Activated CD4-positive, alpha-beta T cell treated with anti-CD3 and anti-CD28 coated beads, Interleukin-2, amount 10 ng/mL, durations not matched to agents 24 days and 14 days (primary cell): ENCODE measurements at regions of chr10 and their contacts with region 1.

Region 1: DNA sequence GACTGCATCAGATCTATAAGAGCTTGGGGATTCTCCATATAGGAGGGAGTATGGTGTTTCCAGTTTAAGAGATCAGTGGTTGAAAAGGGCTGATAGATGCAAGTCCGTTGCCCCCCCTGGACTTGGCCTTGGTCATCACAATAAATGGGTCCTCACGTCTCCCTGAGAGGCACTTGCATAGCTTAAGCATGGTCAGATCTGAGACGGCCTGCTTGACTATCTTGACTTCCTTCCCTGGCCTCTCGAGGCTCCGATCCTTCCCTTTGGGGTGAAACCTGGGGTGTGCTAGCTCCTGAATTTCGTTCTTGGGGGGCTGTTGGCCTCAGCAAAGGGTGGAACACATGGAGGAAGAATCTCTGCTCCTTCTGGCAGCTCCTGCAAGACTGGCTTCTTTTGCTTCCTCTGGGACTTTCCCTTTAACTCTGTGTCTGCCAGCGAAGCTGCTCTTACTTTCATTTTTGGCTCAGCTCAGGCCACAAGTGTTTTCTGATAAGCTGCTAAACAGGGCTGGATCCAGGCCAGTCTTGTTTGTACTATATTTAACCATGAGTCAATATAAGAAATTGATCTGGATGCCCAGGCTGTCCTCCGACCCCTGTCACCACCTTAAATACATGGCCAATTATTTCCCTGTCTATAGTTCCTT is 11.2 kb upstream of the ZNF485 start:
- DNase-seq: peak; percentile 84
- H3K4me3 Mint-ChIP-seq: peak overlapping the region; percentile 69
- H3K27ac Mint-ChIP-seq: peak overlapping the region; percentile 85
- H3K4me1 Mint-ChIP-seq: peaks cover 24% of the 10 kb centered on the region
- H3K27me3 Mint-ChIP-seq: peaks cover 10% of the 10 kb centered on the region

Region 2: DNA sequence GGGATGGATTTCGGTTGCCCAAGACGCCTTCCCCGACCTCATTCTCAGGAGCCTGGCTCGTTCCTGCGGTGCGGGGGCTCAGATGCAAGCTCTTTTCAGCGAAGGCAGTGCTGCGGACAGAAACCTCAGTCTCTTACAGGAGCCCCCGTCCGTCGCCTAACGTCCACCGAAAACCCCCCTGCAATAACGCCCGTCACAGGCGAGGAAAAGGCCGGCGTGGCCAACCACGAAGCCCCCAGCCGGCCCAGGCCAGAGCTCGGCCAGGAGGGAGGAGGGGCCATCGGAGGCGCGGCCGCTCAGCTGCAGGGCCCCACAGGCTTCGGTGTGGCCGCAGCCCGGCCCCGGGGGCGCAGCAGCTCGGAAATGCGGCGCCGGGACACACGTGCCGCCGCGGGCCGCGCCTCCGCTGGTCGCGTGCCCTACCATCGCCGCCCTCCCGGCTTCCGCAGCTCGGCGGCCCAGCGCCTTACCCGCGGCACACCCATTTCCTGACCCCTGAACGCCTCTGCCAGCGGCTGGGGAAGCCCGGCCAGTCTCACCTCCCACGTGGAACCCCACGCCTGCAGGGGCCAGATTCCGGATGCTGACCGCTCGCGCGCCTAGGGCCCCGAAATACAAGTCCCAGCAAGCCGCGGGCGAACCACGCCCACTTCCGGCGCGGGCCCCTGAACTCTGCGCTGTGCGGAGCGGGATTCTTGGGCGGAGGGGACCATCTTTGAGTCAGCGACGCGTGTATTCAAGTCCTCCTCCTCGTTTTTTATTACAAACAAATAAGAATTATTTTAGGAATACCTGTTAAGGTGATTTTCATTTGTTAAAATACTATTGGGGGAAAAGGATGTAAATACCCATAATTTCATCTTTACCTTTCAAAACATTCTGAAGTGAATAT is 20.8 kb before region 1 on chr10 and contains the start of gene ZNF239:
- intact Hi-C with region 1: loop called (anchors 1 kb)
- DNase-seq: peak; percentile 91
- H3K4me3 Mint-ChIP-seq: peak within 1 kb of the TSS; percentile 80
- H3K27ac Mint-ChIP-seq: peak within 1 kb of the TSS; percentile 82
- H3K4me1 Mint-ChIP-seq: peaks cover 25% of the 10 kb centered on the region
- H3K27me3 Mint-ChIP-seq: no peaks in the 10 kb centered on the region
- total RNA-seq, gene ZNF239: 2.5 TPM in 2 replicates

Region 3: GRCh38 chr10:43648398-43649184 is 53.5 kb after region 1 on chr10 and contains the start of gene ZNF32:
- intact Hi-C with region 1: loop called (anchors 2 kb)
- DNase-seq: peak; percentile 95
- H3K4me3 Mint-ChIP-seq: peak within 1 kb of the TSS; percentile 91
- H3K27ac Mint-ChIP-seq: peak within 1 kb of the TSS; percentile 89
- H3K4me1 Mint-ChIP-seq: peaks cover 6% of the 10 kb centered on the region
- H3K27me3 Mint-ChIP-seq: peaks cover 12% of the 10 kb centered on the region
- total RNA-seq, gene ZNF32: 14.9 and 15.2 TPM in 2 replicates

Region 4: GRCh38 chr10:44143556-44143955 is 548.5 kb after region 1 on chr10:
- intact Hi-C with region 1: no loop called
- DNase-seq: no peak
- H3K4me3 Mint-ChIP-seq: no peak overlapping the region
- H3K27ac Mint-ChIP-seq: no peak overlapping the region
- H3K4me1 Mint-ChIP-seq: no peaks in the 10 kb centered on the region
- H3K27me3 Mint-ChIP-seq: no peaks in the 10 kb centered on the region

Region 5: DNA sequence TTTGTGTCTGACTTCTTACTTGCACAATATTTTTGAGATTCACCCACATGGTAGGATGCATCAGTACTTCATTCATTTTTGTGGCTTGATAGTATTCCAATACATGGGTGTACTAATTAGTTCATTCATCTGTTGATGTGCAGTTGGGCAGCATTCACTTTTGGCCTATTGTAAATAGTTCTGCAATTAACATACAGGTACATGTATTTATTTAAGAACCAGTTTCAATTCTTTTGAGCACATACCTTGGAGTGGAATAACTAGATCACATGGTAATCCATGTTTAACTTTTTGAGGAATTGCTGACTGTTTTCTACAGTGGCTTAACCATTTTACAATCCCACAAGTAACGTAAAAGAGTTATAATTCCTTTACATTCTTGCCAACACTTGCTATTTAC is 931.7 kb after region 1 on chr10:
- intact Hi-C with region 1: no loop called
- DNase-seq: no peak
- H3K4me3 Mint-ChIP-seq: no peak overlapping the region
- H3K27ac Mint-ChIP-seq: no peak overlapping the region
- H3K4me1 Mint-ChIP-seq: no peaks in the 10 kb centered on the region
- H3K27me3 Mint-ChIP-seq: no peaks in the 10 kb centered on the region